ENCODE measurements at regions of chr1 and their contacts with region 1.

Region 1: DNA sequence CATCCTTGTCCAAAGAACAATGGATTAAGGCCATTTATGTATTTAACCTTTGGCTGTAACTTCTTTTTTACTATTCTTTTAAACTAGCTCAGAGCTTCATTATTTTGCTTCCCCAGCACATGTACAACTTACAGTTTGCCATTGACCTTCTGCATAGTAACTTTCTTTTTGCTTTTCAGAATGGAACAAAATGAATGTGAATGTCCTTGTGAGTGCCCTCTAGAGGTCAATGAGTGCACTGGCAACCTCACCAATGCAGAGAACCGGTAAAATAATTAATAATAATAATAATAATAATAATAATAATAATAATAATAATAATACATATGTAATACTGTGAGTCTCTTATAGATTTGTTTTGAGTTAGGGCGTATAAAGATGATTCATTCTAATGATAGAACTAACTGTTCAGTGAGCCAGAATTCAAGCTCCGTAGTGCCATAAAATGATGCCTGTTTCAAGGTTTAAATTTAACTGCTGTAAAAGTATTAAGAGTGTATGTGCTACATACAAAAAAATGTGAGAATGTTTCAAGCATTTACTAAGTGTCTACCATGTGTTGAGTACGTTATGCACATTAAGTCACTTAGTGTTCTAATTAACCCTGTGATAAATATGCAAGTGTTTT is 69.0 kb upstream of the RAVER2 start:
- DNase-seq: no peak
- ATAC-seq: no peak
- H3K4me3 Mint-ChIP-seq: no peak overlapping the region
- H3K27ac Mint-ChIP-seq: no peak overlapping the region
- H3K4me1 Mint-ChIP-seq: no peaks in the 10 kb centered on the region
- H3K27me3 Mint-ChIP-seq: no peaks in the 10 kb centered on the region

Region 2: GRCh38 chr1:64663668-64664067 is 12.2 kb before region 1 on chr1:
- CTCF ChIA-PET with region 1: interaction called, 41 read pairs
- POLR2A ChIA-PET with region 1: no interaction called
- intact Hi-C with region 1: no loop called
- DNase-seq: peak; percentile 56
- ATAC-seq: peak; percentile 61
- H3K4me3 Mint-ChIP-seq: no peak overlapping the region
- H3K27ac Mint-ChIP-seq: no peak overlapping the region
- H3K4me1 Mint-ChIP-seq: no peaks in the 10 kb centered on the region
- H3K27me3 Mint-ChIP-seq: peaks cover 2% of the 10 kb centered on the region

Region 3: DNA sequence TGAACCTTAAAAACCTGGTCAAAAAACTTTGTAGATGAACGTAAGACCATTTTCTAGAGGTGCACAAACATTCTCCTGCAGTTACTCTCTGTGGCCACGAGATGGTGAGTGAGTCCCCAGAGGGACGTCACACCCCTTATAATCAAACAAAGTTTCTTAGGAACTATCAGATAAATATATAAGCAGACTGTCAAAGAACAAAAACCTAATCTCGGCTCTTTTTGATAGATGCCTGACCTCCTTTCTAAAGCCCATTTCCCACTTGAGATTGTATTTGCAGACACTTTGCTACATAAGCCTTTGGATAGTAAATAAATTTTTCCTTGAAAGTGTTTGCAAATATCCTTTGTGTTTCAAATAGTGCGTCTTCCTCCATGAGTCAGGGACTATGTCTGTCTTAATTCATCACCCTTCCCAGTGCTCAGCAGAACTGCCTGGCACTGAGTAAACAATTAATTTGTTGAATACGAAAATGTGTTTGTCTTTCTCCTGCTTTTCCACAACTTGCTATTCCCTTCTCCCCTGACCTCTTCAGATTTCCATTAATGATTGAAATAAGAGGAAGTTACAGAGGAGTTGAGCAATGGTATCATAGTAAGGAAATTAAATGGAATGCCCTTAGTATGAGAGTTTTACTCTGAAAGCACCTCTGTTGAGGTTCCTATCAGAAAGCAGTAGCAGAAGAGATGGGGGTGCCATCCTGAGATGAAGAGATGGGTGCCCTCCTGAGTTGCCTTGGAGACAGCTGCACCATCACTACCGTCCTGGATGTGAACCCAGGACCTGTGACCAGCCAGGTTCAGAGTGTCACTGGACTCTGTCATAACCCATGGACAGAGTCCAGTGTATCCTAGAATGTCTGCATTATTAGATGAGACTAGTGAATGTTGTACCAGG is 11.2 kb after region 1 on chr1:
- CTCF ChIA-PET with region 1: interaction called, 12 read pairs
- POLR2A ChIA-PET with region 1: no interaction called
- intact Hi-C with region 1: no loop called
- DNase-seq: peak; percentile 51
- ATAC-seq: peak; percentile 76
- H3K4me3 Mint-ChIP-seq: no peak overlapping the region
- H3K27ac Mint-ChIP-seq: no peak overlapping the region
- H3K4me1 Mint-ChIP-seq: peaks cover 5% of the 10 kb centered on the region
- H3K27me3 Mint-ChIP-seq: no peaks in the 10 kb centered on the region